GM12878 (cell line): ENCODE measurements at regions of chr16 and their contacts with region 1.

Region 1: GRCh38 chr16:58098207-58099096 is 30.7 kb downstream of the CFAP20 start:
- DNase-seq: no peak
- ATAC-seq: no peak
- H3K4me3 ChIP-seq: no peak overlapping the region
- H3K27ac ChIP-seq: no peak overlapping the region
- H3K4me1 ChIP-seq: no peaks in the 10 kb centered on the region
- H3K27me3 ChIP-seq: no peaks in the 10 kb centered on the region
- CTCF ChIP-seq: no peak
- EP300 ChIP-seq: no peak
- POLR2A ChIP-seq: no peak
- RAD21 ChIP-seq: no peak

Region 2: GRCh38 chr16:58110571-58111301 is 12.3 kb after region 1 on chr16:
- CTCF ChIA-PET with region 1: interaction called, 16 read pairs
- POLR2A ChIA-PET with region 1: interaction called, 3 read pairs
- RAD21 ChIA-PET with region 1: interaction called, 6 read pairs
- SMC1A ChIA-PET with region 1: interaction called, 7 read pairs
- in situ Hi-C with region 1: no loop called
- intact Hi-C with region 1: no loop called
- DNase-seq: no peak
- ATAC-seq: no peak; the same call in 1 of the 3 replicates
- H3K4me3 ChIP-seq: no peak overlapping the region
- H3K27ac ChIP-seq: no peak overlapping the region
- H3K4me1 ChIP-seq: peaks cover 3% of the 10 kb centered on the region; the same call in 1 of the 2 replicates
- H3K27me3 ChIP-seq: no peaks in the 10 kb centered on the region
- CTCF ChIP-seq: no peak
- EP300 ChIP-seq: no peak
- POLR2A ChIP-seq: no peak
- RAD21 ChIP-seq: no peak

Region 3: DNA sequence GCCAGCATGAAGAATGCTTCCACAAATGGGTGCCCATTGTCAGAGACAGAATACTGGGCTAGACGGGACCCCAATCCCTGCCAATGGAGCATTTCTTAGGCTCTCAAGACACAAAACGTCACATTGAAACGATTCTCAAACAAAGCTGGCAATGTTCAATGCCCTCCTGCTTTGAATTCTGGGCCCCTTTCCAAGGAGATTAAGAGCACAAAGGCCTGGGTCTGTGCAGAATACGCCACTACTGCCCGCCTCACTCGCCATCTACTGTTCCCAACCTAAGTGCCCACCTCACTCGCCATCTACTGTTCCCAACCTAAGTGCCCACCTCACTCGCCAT is 21.0 kb after region 1 on chr16:
- CTCF ChIA-PET with region 1: interaction called, 186 read pairs
- POLR2A ChIA-PET with region 1: interaction called, 12 read pairs
- RAD21 ChIA-PET with region 1: interaction called, 61 read pairs
- SMC1A ChIA-PET with region 1: interaction called, 50 read pairs
- in situ Hi-C with region 1: no loop called
- intact Hi-C with region 1: no loop called
- DNase-seq: no peak
- ATAC-seq: no peak
- H3K4me3 ChIP-seq: no peak overlapping the region
- H3K27ac ChIP-seq: no peak overlapping the region
- H3K4me1 ChIP-seq: peaks cover 12% of the 10 kb centered on the region
- H3K27me3 ChIP-seq: no peaks in the 10 kb centered on the region
- CTCF ChIP-seq: no peak
- EP300 ChIP-seq: no peak
- POLR2A ChIP-seq: no peak
- RAD21 ChIP-seq: no peak

Region 4: GRCh38 chr16:58530179-58530578 is 431.7 kb after region 1 on chr16:
- CTCF ChIA-PET with region 1: no interaction called
- POLR2A ChIA-PET with region 1: no interaction called
- RAD21 ChIA-PET with region 1: no interaction called
- SMC1A ChIA-PET with region 1: no interaction called
- in situ Hi-C with region 1: no loop called
- intact Hi-C with region 1: no loop called
- DNase-seq: no peak
- ATAC-seq: no peak
- H3K4me3 ChIP-seq: no peak overlapping the region
- H3K27ac ChIP-seq: no peak overlapping the region
- H3K4me1 ChIP-seq: no peaks in the 10 kb centered on the region
- H3K27me3 ChIP-seq: no peaks in the 10 kb centered on the region
- CTCF ChIP-seq: no peak
- EP300 ChIP-seq: no peak
- POLR2A ChIP-seq: no peak
- RAD21 ChIP-seq: no peak